ENCODE measurements at regions of chr1 and their contacts with region 1.

Region 1: GRCh38 chr1:200979574-200980451 is 43.7 kb downstream of the KIF21B start:
- DNase-seq: peak; percentile 20 to 35 (median 22)
- H3K4me3 ChIP-seq: no peak overlapping the region
- H3K27ac ChIP-seq: no peak overlapping the region
- H3K4me1 ChIP-seq: peaks cover 0 to 6% (median 0%) of the 10 kb centered on the region in 4 experiments
- H3K27me3 ChIP-seq: no peaks in the 10 kb centered on the region

Region 2: DNA sequence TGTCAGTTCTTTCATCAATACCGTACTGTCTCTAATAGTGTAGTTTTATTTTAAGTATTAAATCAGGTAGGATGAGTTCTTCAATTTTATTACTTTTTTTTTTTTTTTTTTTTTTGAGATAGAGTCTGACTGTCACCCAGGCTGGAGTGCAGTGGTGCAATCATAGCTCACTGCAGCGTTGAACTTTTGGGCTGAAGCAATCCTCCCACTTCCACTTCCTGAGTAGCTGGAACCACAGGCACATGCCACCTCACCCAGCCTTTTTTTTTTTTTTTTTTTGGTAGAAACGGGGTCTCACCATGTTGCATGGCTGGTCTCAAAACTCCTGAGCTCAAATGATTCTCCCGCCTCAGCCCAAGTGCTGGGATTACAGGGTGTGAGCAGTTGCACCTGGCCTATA is 40.9 kb before region 1 on chr1:
- CTCF ChIA-PET with region 1: no interaction called
- POLR2A ChIA-PET with region 1: no interaction called
- DNase-seq: peak; percentile 28 to 79 (median 76)
- H3K4me3 ChIP-seq: no peak overlapping the region
- H3K27ac ChIP-seq: no peak overlapping the region
- H3K4me1 ChIP-seq: peaks cover 0 to 11% (median 1%) of the 10 kb centered on the region in 4 experiments
- H3K27me3 ChIP-seq: no peaks in the 10 kb centered on the region

Region 3: DNA sequence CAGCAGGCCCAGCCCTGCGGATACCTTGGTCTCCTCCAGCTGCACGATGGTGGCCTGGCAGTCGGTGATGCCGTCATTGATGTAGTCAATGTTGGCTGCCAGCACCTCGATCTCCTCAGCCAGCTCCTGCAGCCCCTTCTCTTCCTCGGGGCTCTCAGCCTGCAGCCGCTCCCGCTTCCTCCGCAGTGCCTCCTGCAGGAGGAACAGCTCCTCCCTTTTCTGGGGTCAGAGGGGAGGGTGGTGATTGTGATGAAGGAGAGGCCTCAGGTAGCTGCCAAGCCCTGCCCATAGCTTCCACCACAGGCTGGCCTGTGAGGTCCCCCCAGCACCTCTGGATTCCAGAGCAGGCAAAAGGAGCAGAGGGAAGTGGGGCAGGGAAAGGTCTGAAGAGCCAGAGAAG is 10.3 kb after region 1 on chr1:
- CTCF ChIA-PET with region 1: interaction called, 45 read pairs
- POLR2A ChIA-PET with region 1: no interaction called
- DNase-seq: no peak
- H3K4me3 ChIP-seq: no peak overlapping the region
- H3K27ac ChIP-seq: no peak overlapping the region
- H3K4me1 ChIP-seq: peaks cover 0 to 11% (median 0%) of the 10 kb centered on the region in 4 experiments
- H3K27me3 ChIP-seq: no peaks in the 10 kb centered on the region

Region 4: GRCh38 chr1:201036188-201036842 is 56.5 kb after region 1 on chr1:
- CTCF ChIA-PET with region 1: interaction called, 221 read pairs
- POLR2A ChIA-PET with region 1: no interaction called
- DNase-seq: no peak
- H3K4me3 ChIP-seq: no peak overlapping the region
- H3K27ac ChIP-seq: no peak overlapping the region
- H3K4me1 ChIP-seq: peaks cover 0 to 4% (median 0%) of the 10 kb centered on the region in 4 experiments
- H3K27me3 ChIP-seq: no peaks in the 10 kb centered on the region